H1 (cell line): ENCODE measurements at regions of chr1 and their contacts with region 1.

Region 1: DNA sequence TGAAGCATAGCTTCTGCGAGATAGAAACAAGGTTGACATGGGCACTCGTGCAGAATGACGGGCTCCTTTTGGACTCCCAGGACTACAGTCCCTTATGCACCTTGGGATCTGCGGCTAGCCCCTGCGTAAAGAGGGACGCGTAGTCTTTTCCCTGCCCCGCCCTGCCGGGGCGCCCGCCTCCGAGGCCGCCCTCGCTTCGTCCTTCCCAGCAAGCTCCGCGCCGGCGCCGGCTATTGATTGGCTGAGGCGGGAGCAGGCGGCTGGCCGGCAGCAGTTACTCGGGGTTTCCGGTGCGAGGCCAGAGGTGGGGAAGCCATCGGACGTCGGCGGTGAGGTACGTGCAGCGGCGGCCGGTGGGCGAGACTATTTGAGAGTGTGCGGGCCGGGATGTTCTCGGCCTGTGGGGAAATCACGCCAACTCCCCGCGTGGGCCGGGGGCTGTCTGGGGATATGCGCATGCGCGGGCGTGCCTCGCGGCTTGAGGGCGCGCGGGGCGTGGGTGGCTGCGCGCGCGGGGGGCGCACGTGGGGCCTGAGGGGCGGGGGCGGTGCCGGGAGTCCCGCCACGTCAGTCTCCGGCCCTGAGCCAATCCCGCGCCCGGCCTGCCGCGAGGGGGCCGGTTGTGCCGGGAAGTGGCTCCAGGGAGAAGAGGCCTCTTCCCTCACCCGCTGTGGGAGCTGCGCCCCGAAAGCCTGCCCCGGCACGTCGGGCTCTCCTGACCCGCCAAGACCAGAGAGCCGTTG is at the start of gene TXLNA:
- DNase-seq: peak; percentile 77 to 95
- H3K4me3 ChIP-seq: peak within 1 kb of the TSS; percentile 44 to 89 (median 76)
- H3K27ac ChIP-seq: peak within 1 kb of the TSS; percentile 69; the same call in 1 of the 2 replicates
- H3K4me1 ChIP-seq: peaks cover 8 to 15% (median 10%) of the 10 kb centered on the region in 4 experiments; a peak in 6 of 7 replicates
- H3K27me3 ChIP-seq: no peaks in the 10 kb centered on the region
- CTCF ChIP-seq: no peak
- EP300 ChIP-seq: no peak
- POLR2A ChIP-seq: peak; percentile 58 to 86
- RAD21 ChIP-seq: no peak
- total RNA-seq, gene TXLNA: 45.4 and 46.9 TPM in 2 replicates

Region 2: GRCh38 chr1:32205401-32206370 is 26.1 kb after region 1 on chr1 and contains the start of gene IQCC:
- CTCF ChIA-PET with region 1: interaction called, 3 read pairs
- POLR2A ChIA-PET with region 1: interaction called, 332 read pairs
- DNase-seq: peak; percentile 81 to 93
- H3K4me3 ChIP-seq: peak within 1 kb of the TSS; percentile 64 to 86 (median 80)
- H3K27ac ChIP-seq: peak within 1 kb of the TSS; percentile 51; the same call in 1 of the 2 replicates
- H3K4me1 ChIP-seq: peaks cover 0 to 21% (median 10%) of the 10 kb centered on the region in 4 experiments; a peak in 6 of 7 replicates
- H3K27me3 ChIP-seq: peaks cover 0 to 4% (median 2%) of the 10 kb centered on the region in 4 experiments; a peak in 3 of 7 replicates
- CTCF ChIP-seq: peak in 2 of 3 experiments; percentile 31 to 43; a peak in 2 of 4 replicates
- EP300 ChIP-seq: 0 out of 3 replicates have a peak, but pooled peaks of 1 of the 2 experiments have one; percentile 25
- POLR2A ChIP-seq: peak in 1 of 2 experiments; percentile 90; a peak in 2 of 3 replicates
- RAD21 ChIP-seq: peak; percentile 46 to 49
- total RNA-seq, gene IQCC: 4.2 and 4.3 TPM in 2 replicates